Left colon (tissue), 2 donors: ENCODE measurements at regions of chr3 and their contacts with region 1.

Region 1: GRCh38 chr3:160707187-160707794 is 30.3 kb downstream of the ARL14 start:
- DNase-seq: peak in 1 of 2 donors; percentile 6
- ATAC-seq: peak; percentile 75

Region 2: DNA sequence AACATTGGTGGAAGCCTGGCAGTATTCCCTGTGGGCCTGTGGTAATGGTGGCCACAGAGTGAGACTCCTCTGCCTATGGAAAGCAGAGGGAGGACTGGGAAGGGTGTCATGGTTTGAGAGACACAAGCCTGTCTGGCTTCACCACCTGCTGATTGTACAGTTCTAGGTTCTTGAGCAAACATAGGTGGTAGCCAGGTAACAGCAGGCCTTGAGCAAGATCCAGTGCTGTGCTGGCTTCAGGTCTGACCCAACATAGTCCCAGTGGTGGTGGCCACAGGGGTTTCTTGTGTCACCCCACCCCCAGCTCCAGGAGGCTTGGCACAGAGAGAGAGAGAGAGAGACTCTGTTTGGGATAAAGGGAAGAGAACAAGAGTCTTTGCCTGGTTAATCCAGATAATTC is 119.3 kb before region 1 on chr3:
- intact Hi-C with region 1: no loop called
- DNase-seq: no peak
- ATAC-seq: no peak

Region 3: GRCh38 chr3:160941885-160942494 is 234.7 kb after region 1 on chr3:
- intact Hi-C with region 1: loop called in 1 of 2 experiments (anchors 2 kb)
- DNase-seq: peak in 1 of 2 donors; percentile 73
- ATAC-seq: peak; percentile 83

Region 4: GRCh38 chr3:161423911-161424522 is 716.7 kb after region 1 on chr3:
- intact Hi-C with region 1: loop called in 1 of 2 experiments (anchors 10 kb)
- DNase-seq: no peak
- ATAC-seq: peak; percentile 52